ENCODE measurements at regions of chr6 and their contacts with region 1.

Region 1: GRCh38 chr6:4788953-4789584 is 12.9 kb downstream of the CDYL start:
- DNase-seq: no peak
- ATAC-seq: peak; percentile 36; the same call in 2 of the 3 replicates
- H3K4me3 ChIP-seq: no peak overlapping the region
- H3K27ac ChIP-seq: no peak overlapping the region
- H3K4me1 ChIP-seq: peaks cover 5 to 18% of the 10 kb centered on the region in 2 experiments; a peak in 4 of 5 replicates
- H3K27me3 ChIP-seq: no peaks in the 10 kb centered on the region
- CTCF ChIP-seq: 0 out of 6 replicates have a peak, but pooled peaks of 1 of the 3 experiments have one; percentile 9
- EP300 ChIP-seq: no peak
- POLR2A ChIP-seq: no peak
- RAD21 ChIP-seq: no peak

Region 2: GRCh38 chr6:4800662-4801061 is 11.6 kb after region 1 on chr6:
- CTCF ChIA-PET with region 1: no interaction called
- POLR2A ChIA-PET with region 1: interaction called, 11 read pairs
- in situ Hi-C with region 1: no loop called
- intact Hi-C with region 1: no loop called
- DNase-seq: no peak
- ATAC-seq: no peak
- H3K4me3 ChIP-seq: no peak overlapping the region
- H3K27ac ChIP-seq: no peak overlapping the region
- H3K4me1 ChIP-seq: peaks cover 7 to 14% of the 10 kb centered on the region in 2 experiments; a peak in 4 of 5 replicates
- H3K27me3 ChIP-seq: no peaks in the 10 kb centered on the region
- CTCF ChIP-seq: no peak
- EP300 ChIP-seq: no peak
- POLR2A ChIP-seq: no peak
- RAD21 ChIP-seq: 0 out of 4 replicates have a peak, but pooled peaks of 1 of the 2 experiments have one; percentile 7

Measured in K562 (cell line).